ENCODE measurements at regions of chr9 and their contacts with region 1.

Region 1: DNA sequence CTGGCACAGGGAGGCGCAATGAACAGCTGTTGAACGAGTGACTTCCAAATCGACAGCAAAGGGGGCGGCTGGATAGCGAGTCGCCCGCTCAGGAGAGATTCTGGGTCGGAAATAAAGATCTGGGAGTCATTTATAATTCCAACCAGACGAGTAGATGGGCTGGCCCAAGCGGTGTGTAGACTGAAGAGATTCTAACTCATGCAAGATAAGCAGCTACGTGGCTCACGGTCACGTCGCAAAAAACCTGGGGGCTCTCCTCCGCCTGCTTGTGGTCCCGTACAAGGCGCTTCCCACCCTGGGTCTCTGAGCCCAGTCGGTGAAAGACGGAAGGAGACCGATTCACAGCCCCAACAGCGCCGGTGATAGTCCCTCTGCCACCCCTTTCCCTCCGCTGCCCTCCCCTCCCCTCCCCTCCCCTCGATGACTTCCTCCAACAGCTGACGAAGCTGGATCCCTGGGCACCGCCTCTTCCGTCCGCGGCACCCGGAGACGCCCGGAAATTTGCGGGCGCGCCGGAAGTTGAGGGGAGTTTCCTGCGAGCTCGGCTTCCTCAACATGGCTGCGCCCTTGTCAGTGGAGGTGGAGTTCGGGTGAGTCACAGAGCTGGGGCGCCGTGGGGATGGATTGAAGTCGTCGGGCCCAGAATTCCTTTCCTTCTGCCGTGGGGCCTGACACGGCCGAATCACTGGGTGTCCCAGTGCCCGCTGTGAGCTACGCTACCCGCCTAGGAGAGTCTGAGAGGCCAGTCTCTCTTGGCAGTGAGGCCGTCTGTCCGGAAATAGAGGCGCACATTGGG is at the start of gene URM1:
- DNase-seq: peak; percentile 95 to 99 (median 96)
- H3K4me3 ChIP-seq: peak within 1 kb of the TSS; percentile 59 to 98 (median 89)
- H3K27ac ChIP-seq: peak within 1 kb of the TSS; percentile 83 to 100 (median 98)
- H3K27me3 ChIP-seq: no peaks in the 10 kb centered on the region
- CTCF ChIP-seq: peak in 28 of 56 donors; percentile 3 to 43 (median 18)
- total RNA-seq, gene URM1: 36.9 to 64.9 (median 48.8) TPM

Region 2: DNA sequence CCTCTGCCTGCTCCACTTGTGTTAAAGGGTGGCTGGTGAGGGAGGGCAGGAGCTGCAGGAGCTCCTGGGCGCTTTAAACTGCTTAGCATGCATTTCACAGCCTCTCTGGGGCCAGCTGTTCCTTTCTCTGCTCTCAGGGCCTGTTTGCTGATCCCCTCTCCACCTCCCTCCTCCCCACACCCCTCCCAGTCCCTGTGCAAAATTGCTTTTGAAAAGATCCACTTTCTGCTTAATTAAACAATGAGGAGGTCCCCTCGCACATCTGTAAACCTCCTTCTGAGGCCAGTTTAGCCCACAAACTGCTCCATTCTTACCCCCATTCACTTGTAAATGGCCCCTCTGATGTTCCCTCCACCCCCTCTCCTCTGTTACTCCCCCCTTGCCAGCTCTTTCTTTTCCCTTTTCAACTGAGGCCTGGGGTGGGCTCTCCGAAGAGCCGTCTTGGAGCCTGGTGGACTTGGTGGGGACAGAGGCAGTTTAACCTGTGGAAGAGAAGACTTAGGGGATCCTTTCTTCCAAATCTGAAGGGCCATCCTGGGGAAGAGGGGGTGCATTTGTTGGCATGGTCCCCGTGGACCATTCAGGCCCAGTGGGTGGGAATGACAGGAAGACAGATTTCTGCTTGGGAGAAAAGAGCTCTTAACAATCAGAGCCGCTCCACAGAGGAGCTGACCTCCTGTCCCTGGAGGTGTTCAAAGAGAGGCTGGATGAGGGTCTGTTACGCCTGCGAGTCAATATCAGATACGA is 12.2 kb after region 1 on chr9:
- intact Hi-C with region 1: loop called in 1 of 2 experiments (anchors 1 kb)
- DNase-seq: peak in 7 of 10 donors; percentile 56 to 83 (median 72)
- H3K4me3 ChIP-seq: peak overlapping the region in 4 of 59 donors; percentile 3 to 33 (median 16)
- H3K27ac ChIP-seq: peak overlapping the region; percentile 76 to 100 (median 98)
- H3K27me3 ChIP-seq: no peaks in the 10 kb centered on the region
- CTCF ChIP-seq: no peak